ENCODE measurements at regions of chr1 and their contacts with region 1.

Region 1: GRCh38 chr1:15617175-15617880 is at the start of gene DDI2:
- DNase-seq: peak; percentile 92 to 95
- ATAC-seq: peak; percentile 91 to 97 (median 94)
- H3K4me3 ChIP-seq: peak within 1 kb of the TSS; percentile 98
- H3K4me3 Mint-ChIP-seq: peak within 1 kb of the TSS; percentile 91
- H3K27ac ChIP-seq: peak within 1 kb of the TSS; percentile 92
- H3K27ac Mint-ChIP-seq: peak within 1 kb of the TSS; percentile 88 to 93
- H3K4me1 ChIP-seq: peaks cover 25% of the 10 kb centered on the region
- H3K4me1 Mint-ChIP-seq: peaks cover 41 to 46% of the 10 kb centered on the region in 2 donors
- H3K27me3 ChIP-seq: no peaks in the 10 kb centered on the region
- H3K27me3 Mint-ChIP-seq: no peaks in the 10 kb centered on the region
- CTCF ChIP-seq: no peak
- total RNA-seq, gene DDI2: 27.3 to 39.8 (median 34.0) TPM

Region 2: GRCh38 chr1:15526490-15527339 is 90.6 kb before region 1 on chr1 and contains the start of gene DNAJC16:
- intact Hi-C with region 1: loop called (anchors 5 kb)
- DNase-seq: peak; percentile 93 to 99
- ATAC-seq: peak; percentile 32 to 58 (median 44)
- H3K4me3 ChIP-seq: peak within 1 kb of the TSS; percentile 73
- H3K4me3 Mint-ChIP-seq: peak within 1 kb of the TSS; percentile 94
- H3K27ac ChIP-seq: peak within 1 kb of the TSS; percentile 100
- H3K27ac Mint-ChIP-seq: peak within 1 kb of the TSS; percentile 96 to 100
- H3K4me1 ChIP-seq: peaks cover 30% of the 10 kb centered on the region
- H3K4me1 Mint-ChIP-seq: peaks cover 45 to 48% of the 10 kb centered on the region in 2 donors
- H3K27me3 ChIP-seq: no peaks in the 10 kb centered on the region
- H3K27me3 Mint-ChIP-seq: no peaks in the 10 kb centered on the region
- CTCF ChIP-seq: no peak
- total RNA-seq, gene DNAJC16: 18.6 to 22.8 (median 18.7) TPM

Region 3: GRCh38 chr1:15562031-15562729 is 55.1 kb before region 1 on chr1:
- intact Hi-C with region 1: no loop called
- DNase-seq: no peak
- ATAC-seq: no peak
- H3K4me3 ChIP-seq: no peak overlapping the region
- H3K4me3 Mint-ChIP-seq: no peak overlapping the region
- H3K27ac ChIP-seq: no peak overlapping the region
- H3K27ac Mint-ChIP-seq: no peak overlapping the region
- H3K4me1 ChIP-seq: no peaks in the 10 kb centered on the region
- H3K4me1 Mint-ChIP-seq: no peaks in the 10 kb centered on the region
- H3K27me3 ChIP-seq: no peaks in the 10 kb centered on the region
- H3K27me3 Mint-ChIP-seq: no peaks in the 10 kb centered on the region
- CTCF ChIP-seq: no peak

Region 4: DNA sequence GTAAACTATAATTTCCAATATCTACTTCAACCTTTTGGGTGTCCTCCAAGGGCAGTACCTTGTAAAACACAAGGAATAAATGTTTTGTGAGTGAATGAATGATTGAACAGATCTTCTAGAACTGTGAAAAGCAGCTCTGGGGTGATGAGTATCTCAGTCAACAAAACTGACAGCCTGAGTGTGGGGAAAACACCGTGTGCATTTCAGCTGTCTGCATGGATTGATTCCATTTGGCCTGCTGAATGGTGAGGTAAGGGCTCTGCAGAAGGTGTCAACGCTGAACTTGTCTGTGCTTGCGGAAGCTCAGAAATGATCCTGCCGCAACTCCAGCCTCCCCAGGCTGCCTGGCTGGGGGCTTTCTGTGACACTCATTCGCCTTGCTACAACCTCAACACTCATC is 25.0 kb before region 1 on chr1:
- intact Hi-C with region 1: no loop called
- DNase-seq: no peak
- ATAC-seq: no peak
- H3K4me3 ChIP-seq: no peak overlapping the region
- H3K4me3 Mint-ChIP-seq: no peak overlapping the region
- H3K27ac ChIP-seq: no peak overlapping the region
- H3K27ac Mint-ChIP-seq: no peak overlapping the region
- H3K4me1 ChIP-seq: no peaks in the 10 kb centered on the region
- H3K4me1 Mint-ChIP-seq: no peaks in the 10 kb centered on the region
- H3K27me3 ChIP-seq: no peaks in the 10 kb centered on the region
- H3K27me3 Mint-ChIP-seq: peaks cover 0 to 5% of the 10 kb centered on the region in 2 donors
- CTCF ChIP-seq: no peak

Region 5: DNA sequence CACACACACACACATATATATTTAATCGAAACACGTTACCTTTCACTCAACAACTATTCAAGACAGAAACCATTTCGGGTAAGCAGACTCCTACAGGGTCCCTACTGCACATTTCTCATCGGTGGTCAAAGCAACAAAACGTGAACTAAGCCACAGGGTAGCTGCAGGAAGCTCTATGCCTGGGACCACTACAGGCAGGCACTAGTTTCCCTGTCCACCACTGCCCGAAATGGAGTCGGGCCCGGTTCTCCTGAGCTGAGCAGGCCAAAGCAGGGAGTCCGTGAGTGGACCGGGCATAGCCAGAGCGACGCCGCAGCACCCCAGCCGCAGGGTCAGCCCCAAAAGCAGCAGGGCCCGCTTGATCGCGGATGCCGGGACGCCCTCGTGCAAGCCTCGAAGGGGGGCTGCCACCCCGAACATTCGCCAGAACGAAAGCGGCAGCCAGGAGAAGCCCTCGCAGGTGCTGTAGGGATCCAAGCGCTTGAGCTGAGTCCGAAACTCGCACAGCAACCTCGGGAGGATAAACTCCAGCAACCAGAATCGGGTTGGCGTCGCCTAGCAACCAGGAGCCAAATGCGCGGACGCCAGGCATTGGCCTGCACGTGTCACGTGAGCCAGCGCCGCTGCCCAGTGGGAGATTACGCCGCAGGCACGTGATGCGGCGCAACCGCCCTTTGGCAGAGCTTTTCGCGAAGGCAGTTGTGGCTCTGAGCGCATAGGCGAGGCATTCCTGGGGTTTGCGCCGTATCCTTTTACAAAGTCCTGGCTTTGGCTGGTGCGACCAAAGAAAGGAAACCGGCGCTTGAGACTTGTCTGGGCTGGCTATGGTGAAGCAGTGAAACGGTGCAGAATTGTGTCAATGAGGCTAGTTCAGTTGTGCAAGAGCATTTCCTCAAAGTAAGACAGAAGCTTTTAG is 14.0 kb before region 1 on chr1:
- intact Hi-C with region 1: loop called (anchors 1 kb)
- DNase-seq: peak; percentile 87 to 97
- ATAC-seq: peak; percentile 94 to 99 (median 98)
- H3K4me3 ChIP-seq: peak overlapping the region; percentile 56
- H3K4me3 Mint-ChIP-seq: peak overlapping the region; percentile 89
- H3K27ac ChIP-seq: peak overlapping the region; percentile 47
- H3K27ac Mint-ChIP-seq: peak overlapping the region; percentile 85 to 87
- H3K4me1 ChIP-seq: peaks cover 16% of the 10 kb centered on the region
- H3K4me1 Mint-ChIP-seq: peaks cover 13 to 14% of the 10 kb centered on the region in 2 donors
- H3K27me3 ChIP-seq: no peaks in the 10 kb centered on the region
- H3K27me3 Mint-ChIP-seq: peaks cover 2 to 5% of the 10 kb centered on the region in 2 donors
- CTCF ChIP-seq: no peak

Region 6: DNA sequence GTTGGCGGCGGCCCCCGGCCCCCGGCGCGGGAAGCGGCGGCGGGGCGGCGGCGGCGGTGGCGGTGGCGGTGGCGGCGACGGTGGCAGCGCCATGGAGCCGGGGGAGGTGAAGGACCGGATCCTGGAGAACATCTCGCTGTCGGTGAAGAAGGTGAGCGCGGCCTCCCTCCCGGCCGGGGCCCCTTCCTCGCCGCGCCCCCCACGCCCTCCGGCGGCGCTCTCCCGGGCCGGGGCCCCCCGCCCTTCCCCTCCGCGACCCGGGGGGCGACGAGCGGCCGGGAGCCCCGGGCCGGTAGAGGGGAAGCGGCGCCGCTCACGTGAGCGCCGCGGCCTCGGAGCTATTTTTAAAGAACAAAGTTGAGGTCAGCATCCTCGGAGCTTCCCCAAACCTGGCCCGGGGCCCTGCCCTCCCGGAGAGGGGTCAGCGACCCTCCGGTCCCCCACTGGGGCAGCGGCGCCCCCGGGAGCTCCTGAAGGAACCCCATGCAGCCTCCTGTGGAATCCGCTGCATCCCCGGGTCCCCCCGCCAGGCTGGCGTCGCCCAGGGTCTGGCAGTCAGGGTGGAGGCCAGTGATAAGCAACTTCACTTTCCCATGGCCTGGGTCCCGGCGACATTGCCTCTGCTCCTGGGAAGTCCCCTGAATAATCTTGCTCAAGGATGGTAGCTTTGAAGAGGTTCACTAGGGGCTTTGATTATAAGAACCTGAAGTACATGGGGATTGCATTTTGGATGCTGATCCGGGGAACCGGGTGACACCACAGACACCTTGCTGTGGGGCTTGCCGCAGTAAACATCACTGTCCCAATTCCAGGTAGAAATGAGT is 67.4 kb after region 1 on chr1:
- intact Hi-C with region 1: loop called (anchors 10 kb)
- DNase-seq: peak; percentile 38 to 64
- ATAC-seq: peak; percentile 48 to 67 (median 49)
- H3K4me3 ChIP-seq: peak overlapping the region; percentile 71
- H3K4me3 Mint-ChIP-seq: peak overlapping the region; percentile 91
- H3K27ac ChIP-seq: peak overlapping the region; percentile 77
- H3K27ac Mint-ChIP-seq: peak overlapping the region; percentile 88 to 89
- H3K4me1 ChIP-seq: peaks cover 15% of the 10 kb centered on the region
- H3K4me1 Mint-ChIP-seq: peaks cover 24 to 39% of the 10 kb centered on the region in 2 donors
- H3K27me3 ChIP-seq: no peaks in the 10 kb centered on the region
- H3K27me3 Mint-ChIP-seq: no peaks in the 10 kb centered on the region
- CTCF ChIP-seq: no peak